WTC11 (cell line): ENCODE measurements at regions of chr14 and their contacts with region 1.

Region 1: GRCh38 chr14:60331201-60332045 is 82.4 kb downstream of the PPM1A start:
- DNase-seq: peak; percentile 90
- ATAC-seq: peak; percentile 74
- H3K4me3 Mint-ChIP-seq: peak overlapping the region; percentile 76
- H3K27ac Mint-ChIP-seq: peak overlapping the region; percentile 82
- H3K4me1 Mint-ChIP-seq: peaks cover 35% of the 10 kb centered on the region
- H3K27me3 Mint-ChIP-seq: no peaks in the 10 kb centered on the region; the same call in 1 of the 2 replicates
- CTCF ChIP-seq: peak; percentile 95

Region 2: GRCh38 chr14:60309867-60310552 is 21.4 kb before region 1 on chr14:
- CTCF ChIA-PET with region 1: interaction called, 15 read pairs
- POLR2A ChIA-PET with region 1: no interaction called
- DNase-seq: no peak
- ATAC-seq: peak; percentile 56
- H3K4me3 Mint-ChIP-seq: no peak overlapping the region
- H3K27ac Mint-ChIP-seq: no peak overlapping the region
- H3K4me1 Mint-ChIP-seq: peaks cover 43% of the 10 kb centered on the region
- H3K27me3 Mint-ChIP-seq: no peaks in the 10 kb centered on the region
- CTCF ChIP-seq: no peak

Region 3: GRCh38 chr14:60349663-60350365 is 18.4 kb after region 1 on chr14:
- CTCF ChIA-PET with region 1: interaction called, 47 read pairs
- POLR2A ChIA-PET with region 1: interaction called, 3 read pairs
- DNase-seq: peak; percentile 22
- ATAC-seq: peak; percentile 79
- H3K4me3 Mint-ChIP-seq: peak overlapping the region; percentile 44
- H3K27ac Mint-ChIP-seq: no peak overlapping the region
- H3K4me1 Mint-ChIP-seq: peaks cover 58% of the 10 kb centered on the region
- H3K27me3 Mint-ChIP-seq: no peaks in the 10 kb centered on the region; the same call in 1 of the 2 replicates
- CTCF ChIP-seq: peak; percentile 75

Region 4: DNA sequence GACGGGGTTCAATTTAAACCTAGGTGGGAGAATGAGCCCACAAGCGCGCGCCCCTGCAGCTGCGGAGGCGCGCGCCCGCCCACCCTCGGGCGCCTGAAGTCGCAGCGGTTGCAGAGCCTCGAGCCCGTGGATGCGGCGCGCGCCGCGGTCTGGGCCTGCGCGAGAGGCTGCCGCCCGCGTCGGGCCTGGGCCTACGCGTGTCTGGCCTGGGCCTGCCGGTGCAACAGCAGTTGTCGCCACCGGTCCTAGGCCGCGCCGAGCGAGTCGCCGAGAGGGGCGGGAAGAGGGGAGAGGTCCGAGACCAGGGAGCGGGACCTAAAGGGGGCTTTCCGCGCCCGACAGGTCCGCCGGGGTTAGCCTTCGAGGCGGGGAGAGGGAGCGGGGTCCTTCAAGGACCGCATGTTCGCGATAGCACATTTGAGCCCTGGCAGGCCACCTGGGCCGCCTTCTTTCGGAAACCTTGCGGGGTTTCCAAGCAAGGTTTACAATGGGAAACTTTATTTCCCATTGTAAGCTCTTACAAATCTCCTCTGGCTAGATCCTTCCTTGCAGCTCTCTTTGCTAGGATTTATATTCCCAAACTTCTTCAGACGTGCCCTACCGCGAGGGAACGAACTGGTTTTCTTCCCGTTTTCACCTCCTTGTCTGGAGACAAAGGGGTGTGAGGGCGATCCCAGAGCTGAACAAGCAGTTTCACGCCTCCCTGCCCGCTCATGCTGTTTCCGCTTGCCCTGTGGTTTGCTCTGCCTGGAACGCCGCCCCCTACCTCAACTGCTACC is 184.3 kb after region 1 on chr14:
- CTCF ChIA-PET with region 1: interaction called, 10 read pairs
- POLR2A ChIA-PET with region 1: interaction called, 5 read pairs
- DNase-seq: peak; percentile 63
- ATAC-seq: peak; percentile 61
- H3K4me3 Mint-ChIP-seq: peak overlapping the region; percentile 70
- H3K27ac Mint-ChIP-seq: no peak overlapping the region
- H3K4me1 Mint-ChIP-seq: peaks cover 45% of the 10 kb centered on the region
- H3K27me3 Mint-ChIP-seq: peaks cover 88% of the 10 kb centered on the region
- CTCF ChIP-seq: no peak

Region 5: DNA sequence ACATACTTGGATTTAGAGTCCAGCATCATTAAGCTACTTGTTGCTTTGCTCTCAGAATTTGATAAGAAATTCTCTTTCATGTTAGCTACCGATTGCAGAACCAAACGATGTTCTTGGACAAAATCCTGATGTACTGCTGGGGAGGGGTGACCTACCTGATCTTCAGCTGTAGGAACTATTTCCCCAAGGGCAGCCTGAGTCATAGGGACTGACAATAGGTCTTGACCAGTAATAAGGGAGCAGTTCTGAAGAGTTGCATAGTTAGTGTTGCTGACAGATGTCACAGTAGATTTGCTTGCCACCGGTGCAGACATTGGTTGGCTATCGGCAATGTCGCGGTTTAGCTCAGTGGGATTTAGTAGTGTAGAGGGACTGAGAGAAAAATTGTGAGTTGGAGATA is 382.1 kb after region 1 on chr14:
- CTCF ChIA-PET with region 1: no interaction called
- POLR2A ChIA-PET with region 1: no interaction called
- DNase-seq: no peak
- ATAC-seq: no peak
- H3K4me3 Mint-ChIP-seq: no peak overlapping the region
- H3K27ac Mint-ChIP-seq: no peak overlapping the region
- H3K4me1 Mint-ChIP-seq: peaks cover 18% of the 10 kb centered on the region
- H3K27me3 Mint-ChIP-seq: no peaks in the 10 kb centered on the region
- CTCF ChIP-seq: no peak